ENCODE measurements at regions of chr2 and their contacts with region 1.

Region 1: DNA sequence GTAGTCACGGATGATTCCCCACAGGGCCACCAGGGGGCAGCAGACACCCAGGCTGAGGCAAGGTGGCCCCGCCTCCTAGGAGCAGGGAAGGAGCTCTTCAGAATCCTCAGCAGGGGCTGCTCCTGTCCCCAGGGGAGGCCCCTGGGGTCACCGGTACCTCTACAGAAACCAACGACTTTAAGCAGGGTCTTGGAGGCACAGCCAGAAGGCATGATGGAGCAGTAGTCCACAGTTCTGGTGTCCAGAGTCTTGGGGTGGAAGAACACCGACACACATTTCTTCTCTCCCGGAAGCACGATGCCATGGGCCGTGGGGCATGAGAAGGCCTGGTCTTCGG is 11.5 kb downstream of the CFAP65 start:
- DNase-seq: peak; percentile 84 to 91
- H3K4me3 ChIP-seq: no peak overlapping the region
- H3K4me3 Mint-ChIP-seq: no peak overlapping the region
- H3K27ac Mint-ChIP-seq: no peak overlapping the region
- H3K4me1 ChIP-seq: no peaks in the 10 kb centered on the region
- H3K4me1 Mint-ChIP-seq: peaks cover 11% of the 10 kb centered on the region
- H3K27me3 ChIP-seq: no peaks in the 10 kb centered on the region
- H3K27me3 Mint-ChIP-seq: peaks cover 11% of the 10 kb centered on the region
- CTCF ChIP-seq: peak; percentile 96

Region 2: DNA sequence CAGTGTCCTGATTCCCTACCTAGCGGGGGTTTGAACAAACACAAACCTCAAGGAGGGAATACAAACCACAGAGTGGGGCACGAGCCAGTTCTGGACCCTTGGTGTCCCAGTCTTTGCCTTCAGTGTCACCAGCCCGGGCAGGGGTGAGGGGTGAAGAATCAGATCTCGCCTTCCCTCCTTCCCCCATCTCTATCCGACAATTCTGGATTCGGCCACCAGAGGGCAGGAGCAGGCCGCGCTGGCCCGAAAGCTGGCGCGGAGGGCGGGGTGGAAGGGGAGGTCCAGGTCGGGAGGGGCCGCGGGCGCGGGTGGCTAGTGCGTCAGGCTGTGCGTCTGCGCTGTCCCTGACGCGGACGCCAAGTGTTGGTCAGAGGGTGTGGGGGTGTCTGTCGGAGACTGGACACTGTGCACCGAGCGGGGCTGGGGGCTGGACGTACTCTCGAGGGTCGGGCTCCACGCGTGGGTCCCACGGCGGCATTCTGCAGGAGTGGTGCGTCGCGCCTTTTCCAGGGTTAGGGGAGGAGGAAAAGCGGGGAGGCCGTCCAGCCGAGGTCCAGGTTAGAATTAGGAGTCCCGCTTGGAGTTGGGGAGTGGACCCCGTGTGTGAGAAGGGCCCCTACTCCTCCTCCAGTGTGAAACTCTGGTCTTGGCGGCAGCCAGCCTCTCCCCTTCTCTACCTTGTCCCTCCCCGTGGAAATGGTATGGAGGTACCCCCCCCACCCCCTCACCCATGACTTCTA is 33.7 kb before region 1 on chr2:
- CTCF ChIA-PET with region 1: interaction called, 25 read pairs
- POLR2A ChIA-PET with region 1: no interaction called
- intact Hi-C with region 1: loop called (anchors 1 kb)
- DNase-seq: peak; percentile 88 to 95
- H3K4me3 ChIP-seq: peak overlapping the region; percentile 47
- H3K4me3 Mint-ChIP-seq: peak overlapping the region; percentile 82
- H3K27ac Mint-ChIP-seq: peak overlapping the region; percentile 83
- H3K4me1 ChIP-seq: peaks cover 21% of the 10 kb centered on the region
- H3K4me1 Mint-ChIP-seq: peaks cover 9% of the 10 kb centered on the region
- H3K27me3 ChIP-seq: peaks cover 2% of the 10 kb centered on the region
- H3K27me3 Mint-ChIP-seq: peaks cover 6% of the 10 kb centered on the region
- CTCF ChIP-seq: peak; percentile 93 to 95

Region 3: DNA sequence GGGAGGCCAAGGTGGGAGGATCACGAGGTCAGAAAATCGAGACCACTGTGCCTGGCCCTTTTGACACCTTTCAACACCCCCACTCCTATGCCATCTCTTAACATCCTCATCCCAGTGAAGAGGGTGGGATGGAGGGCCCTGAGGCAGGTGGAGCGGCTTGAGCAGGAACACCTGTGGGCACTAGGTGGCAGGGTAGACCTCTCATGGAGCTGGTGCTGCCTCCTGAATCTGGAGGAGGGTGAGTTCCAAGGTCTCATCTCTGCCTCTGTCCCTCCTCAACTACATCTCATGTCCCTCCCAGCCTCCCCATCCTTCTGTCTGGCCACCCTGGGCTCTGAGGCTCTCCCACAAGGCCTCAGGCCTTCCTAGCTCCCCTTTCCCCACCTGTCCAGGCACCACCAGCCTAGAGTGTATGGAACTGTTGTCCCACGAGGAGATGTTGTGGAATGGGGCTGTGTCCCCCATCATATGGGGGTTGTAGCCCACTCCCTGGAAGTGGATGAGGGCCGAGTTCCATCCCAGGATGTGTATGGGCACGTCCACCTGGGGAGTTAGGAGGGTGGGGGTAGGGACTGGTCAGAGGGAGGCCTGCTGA is 19.5 kb before region 1 on chr2:
- CTCF ChIA-PET with region 1: interaction called, 18 read pairs
- POLR2A ChIA-PET with region 1: interaction called, 3 read pairs
- intact Hi-C with region 1: no loop called
- DNase-seq: peak; percentile 66 to 73
- H3K4me3 ChIP-seq: no peak overlapping the region
- H3K4me3 Mint-ChIP-seq: no peak overlapping the region
- H3K27ac Mint-ChIP-seq: no peak overlapping the region
- H3K4me1 ChIP-seq: peaks cover 12% of the 10 kb centered on the region
- H3K4me1 Mint-ChIP-seq: peaks cover 6% of the 10 kb centered on the region
- H3K27me3 ChIP-seq: no peaks in the 10 kb centered on the region
- H3K27me3 Mint-ChIP-seq: peaks cover 6% of the 10 kb centered on the region
- CTCF ChIP-seq: peak; percentile 66 to 83

Region 4: GRCh38 chr2:219057709-219058540 is 28.1 kb after region 1 on chr2:
- CTCF ChIA-PET with region 1: interaction called, 39 read pairs
- POLR2A ChIA-PET with region 1: no interaction called
- intact Hi-C with region 1: loop called (anchors 1 kb)
- DNase-seq: peak; percentile 82 to 89
- H3K4me3 ChIP-seq: peak overlapping the region; percentile 99
- H3K4me3 Mint-ChIP-seq: peak overlapping the region; percentile 92
- H3K27ac Mint-ChIP-seq: no peak overlapping the region
- H3K4me1 ChIP-seq: peaks cover 11% of the 10 kb centered on the region
- H3K4me1 Mint-ChIP-seq: peaks cover 7% of the 10 kb centered on the region
- H3K27me3 ChIP-seq: no peaks in the 10 kb centered on the region
- H3K27me3 Mint-ChIP-seq: peaks cover 3% of the 10 kb centered on the region
- CTCF ChIP-seq: peak; percentile 91 to 95

Region 5: DNA sequence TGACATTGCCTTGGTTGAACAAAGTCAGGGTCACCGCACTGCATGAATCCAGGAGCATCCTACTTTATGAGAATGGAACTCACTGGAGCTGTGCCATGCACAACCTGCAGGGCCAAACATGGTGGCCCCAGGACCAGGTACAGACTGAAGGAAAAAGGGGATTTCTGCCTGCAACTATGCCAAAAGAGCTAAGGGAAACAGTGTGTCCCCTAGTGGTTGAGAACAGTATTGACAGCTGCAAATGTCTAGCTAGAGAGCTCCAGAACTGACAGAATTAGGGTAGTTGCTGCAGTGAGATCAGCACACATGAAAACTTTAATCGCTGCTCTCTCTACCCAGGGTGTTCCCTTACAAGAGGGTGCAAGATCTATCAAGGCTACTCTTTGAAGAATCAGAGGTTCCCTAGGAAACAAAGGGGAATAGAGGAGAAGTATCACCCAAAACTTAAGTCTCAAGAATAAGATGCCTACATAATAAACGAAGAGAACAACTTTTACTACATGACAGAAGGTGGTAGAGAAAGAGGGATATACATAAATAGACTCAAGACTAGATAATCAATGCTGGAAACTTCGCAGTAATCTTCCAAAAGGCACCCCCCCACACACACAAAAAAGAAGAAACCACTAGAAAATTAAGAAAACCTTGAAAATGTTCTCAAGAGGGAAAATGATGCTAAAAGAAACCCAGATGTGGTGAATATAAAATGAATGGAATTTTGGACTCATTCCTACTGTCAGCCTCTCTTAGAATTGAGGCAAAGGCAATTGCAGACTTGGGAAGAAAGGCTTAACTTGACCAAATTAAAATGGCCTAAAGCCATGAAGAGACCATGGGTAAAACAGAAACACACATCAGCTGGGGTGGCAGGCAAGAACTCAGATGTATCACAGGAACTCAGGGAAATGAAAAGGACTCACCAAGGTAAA is 74.6 kb after region 1 on chr2:
- CTCF ChIA-PET with region 1: interaction called, 12 read pairs
- POLR2A ChIA-PET with region 1: no interaction called
- intact Hi-C with region 1: no loop called
- DNase-seq: peak; percentile 60
- H3K4me3 ChIP-seq: no peak overlapping the region
- H3K4me3 Mint-ChIP-seq: no peak overlapping the region
- H3K27ac Mint-ChIP-seq: no peak overlapping the region
- H3K4me1 ChIP-seq: peaks cover 10% of the 10 kb centered on the region
- H3K4me1 Mint-ChIP-seq: peaks cover 4% of the 10 kb centered on the region
- H3K27me3 ChIP-seq: no peaks in the 10 kb centered on the region
- H3K27me3 Mint-ChIP-seq: no peaks in the 10 kb centered on the region
- CTCF ChIP-seq: peak; percentile 80 to 86

Region 6: GRCh38 chr2:219125225-219125885 is 95.6 kb after region 1 on chr2:
- CTCF ChIA-PET with region 1: interaction called, 20 read pairs
- POLR2A ChIA-PET with region 1: no interaction called
- intact Hi-C with region 1: no loop called
- DNase-seq: peak; percentile 57 to 85
- H3K4me3 ChIP-seq: no peak overlapping the region
- H3K4me3 Mint-ChIP-seq: peak overlapping the region; percentile 53
- H3K27ac Mint-ChIP-seq: peak overlapping the region; percentile 25
- H3K4me1 ChIP-seq: peaks cover 73% of the 10 kb centered on the region
- H3K4me1 Mint-ChIP-seq: peaks cover 50% of the 10 kb centered on the region
- H3K27me3 ChIP-seq: no peaks in the 10 kb centered on the region
- H3K27me3 Mint-ChIP-seq: no peaks in the 10 kb centered on the region
- CTCF ChIP-seq: no peak

Region 7: DNA sequence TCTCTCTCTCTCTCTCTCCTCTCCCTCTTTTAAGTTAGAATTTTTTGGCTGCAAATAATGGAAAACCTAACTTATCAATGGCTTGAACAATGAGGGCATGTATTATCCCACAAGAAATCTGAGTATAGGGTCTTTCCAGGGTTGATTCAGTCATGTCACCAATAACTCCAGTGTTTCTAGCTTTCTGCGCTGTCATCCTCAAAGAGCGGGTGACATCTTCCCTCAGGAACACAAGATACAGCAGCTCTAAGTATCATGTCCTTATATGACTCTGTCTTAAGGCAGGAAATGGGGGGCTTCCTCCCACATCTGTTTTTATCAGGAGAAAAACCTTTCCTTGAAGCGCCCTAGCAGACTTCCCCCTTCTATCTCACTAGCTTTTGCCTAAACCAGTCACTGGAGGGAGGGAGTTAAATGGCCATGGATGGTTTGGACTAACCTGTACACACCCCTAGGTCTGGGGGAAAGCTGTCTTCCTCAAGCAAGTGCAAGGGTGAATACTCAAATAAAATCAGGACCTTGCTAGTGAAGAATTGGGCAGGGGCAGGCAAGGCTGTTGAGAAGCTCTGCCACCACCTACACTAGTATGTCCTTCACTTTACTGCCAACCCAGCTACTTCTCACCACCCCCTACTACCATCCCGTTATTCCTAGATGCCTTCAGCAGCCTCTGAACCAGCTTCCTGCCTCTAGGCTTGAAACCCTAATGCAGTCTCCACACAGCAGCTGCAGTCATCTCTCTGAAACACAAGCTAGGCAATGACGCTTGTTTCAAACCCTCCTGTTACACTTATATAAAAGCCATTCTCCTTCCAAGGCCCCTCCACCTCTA is 231.4 kb after region 1 on chr2:
- CTCF ChIA-PET with region 1: no interaction called
- POLR2A ChIA-PET with region 1: no interaction called
- intact Hi-C with region 1: no loop called
- DNase-seq: no peak
- H3K4me3 ChIP-seq: no peak overlapping the region
- H3K4me3 Mint-ChIP-seq: no peak overlapping the region
- H3K27ac Mint-ChIP-seq: no peak overlapping the region
- H3K4me1 ChIP-seq: no peaks in the 10 kb centered on the region
- H3K4me1 Mint-ChIP-seq: no peaks in the 10 kb centered on the region
- H3K27me3 ChIP-seq: no peaks in the 10 kb centered on the region
- H3K27me3 Mint-ChIP-seq: peaks cover 13% of the 10 kb centered on the region
- CTCF ChIP-seq: no peak